ENCODE measurements at regions of chr3 and their contacts with region 1.

Region 1: GRCh38 chr3:30623351-30623750 is 16.9 kb downstream of the TGFBR2 start:
- DNase-seq: no peak
- ATAC-seq: no peak
- H3K4me3 ChIP-seq: no peak overlapping the region
- H3K4me3 Mint-ChIP-seq: peak overlapping the region; percentile 47 to 97 (median 61)
- H3K27ac ChIP-seq: peak overlapping the region; percentile 48
- H3K27ac Mint-ChIP-seq: peak overlapping the region; percentile 93
- H3K4me1 ChIP-seq: peaks cover 64 to 90% of the 10 kb centered on the region in 2 experiments
- H3K4me1 Mint-ChIP-seq: peaks cover 94 to 96% (median 95%) of the 10 kb centered on the region in 3 donors
- H3K27me3 ChIP-seq: no peaks in the 10 kb centered on the region
- H3K27me3 Mint-ChIP-seq: no peaks in the 10 kb centered on the region

Region 2: GRCh38 chr3:30607032-30607833 is 16.1 kb before region 1 on chr3:
- CTCF ChIA-PET with region 1: interaction called, 3 to 5 read pairs
- POLR2A ChIA-PET with region 1: interaction called, 3 to 18 read pairs
- DNase-seq: peak; percentile 52 to 80 (median 66)
- ATAC-seq: peak; percentile 46 to 56 (median 47)
- H3K4me3 ChIP-seq: peak overlapping the region; percentile 90 to 97
- H3K4me3 Mint-ChIP-seq: peak overlapping the region; percentile 96 to 99 (median 97)
- H3K27ac ChIP-seq: peak overlapping the region; percentile 88
- H3K27ac Mint-ChIP-seq: peak overlapping the region; percentile 93 to 99
- H3K4me1 ChIP-seq: peaks cover 37 to 43% of the 10 kb centered on the region in 2 experiments
- H3K4me1 Mint-ChIP-seq: peaks cover 61 to 70% (median 66%) of the 10 kb centered on the region in 3 donors
- H3K27me3 ChIP-seq: no peaks in the 10 kb centered on the region
- H3K27me3 Mint-ChIP-seq: no peaks in the 10 kb centered on the region

Region 3: GRCh38 chr3:30658328-30659052 is 35.1 kb after region 1 on chr3:
- CTCF ChIA-PET with region 1: interaction called in 1 of 2 experiments, 4 read pairs
- POLR2A ChIA-PET with region 1: interaction called, 3 to 17 read pairs
- DNase-seq: peak in 31 of 35 experiments; percentile 28 to 79 (median 47)
- ATAC-seq: peak; percentile 58 to 72 (median 68)
- H3K4me3 ChIP-seq: peak overlapping the region in 1 of 2 donors; percentile 3
- H3K4me3 Mint-ChIP-seq: peak overlapping the region; percentile 58 to 76 (median 62)
- H3K27ac ChIP-seq: peak overlapping the region; percentile 97
- H3K27ac Mint-ChIP-seq: peak overlapping the region; percentile 95 to 96
- H3K4me1 ChIP-seq: peaks cover 82 to 100% of the 10 kb centered on the region in 2 experiments
- H3K4me1 Mint-ChIP-seq: peaks cover 97 to 99% (median 97%) of the 10 kb centered on the region in 3 donors
- H3K27me3 ChIP-seq: no peaks in the 10 kb centered on the region
- H3K27me3 Mint-ChIP-seq: no peaks in the 10 kb centered on the region

Region 4: GRCh38 chr3:30847592-30847991 is 224.2 kb after region 1 on chr3:
- CTCF ChIA-PET with region 1: no interaction called
- POLR2A ChIA-PET with region 1: no interaction called
- DNase-seq: no peak
- ATAC-seq: no peak
- H3K4me3 ChIP-seq: no peak overlapping the region
- H3K4me3 Mint-ChIP-seq: no peak overlapping the region
- H3K27ac ChIP-seq: no peak overlapping the region
- H3K27ac Mint-ChIP-seq: no peak overlapping the region
- H3K4me1 ChIP-seq: no peaks in the 10 kb centered on the region
- H3K4me1 Mint-ChIP-seq: no peaks in the 10 kb centered on the region
- H3K27me3 ChIP-seq: peaks cover 0 to 2% of the 10 kb centered on the region in 2 experiments
- H3K27me3 Mint-ChIP-seq: no peaks in the 10 kb centered on the region

Region 5: GRCh38 chr3:31575448-31575847 is 952.1 kb after region 1 on chr3:
- CTCF ChIA-PET with region 1: no interaction called
- POLR2A ChIA-PET with region 1: interaction called in 1 of 2 experiments, 13 read pairs
- DNase-seq: peak in 1 of 35 experiments; percentile 39
- ATAC-seq: peak; percentile 67 to 83 (median 79)
- H3K4me3 ChIP-seq: no peak overlapping the region
- H3K4me3 Mint-ChIP-seq: peak overlapping the region in 2 of 3 donors; percentile 4 to 17
- H3K27ac ChIP-seq: no peak overlapping the region
- H3K27ac Mint-ChIP-seq: peak overlapping the region; percentile 27 to 42
- H3K4me1 ChIP-seq: peaks cover 5 to 26% of the 10 kb centered on the region in 2 experiments
- H3K4me1 Mint-ChIP-seq: peaks cover 21 to 41% (median 35%) of the 10 kb centered on the region in 3 donors
- H3K27me3 ChIP-seq: no peaks in the 10 kb centered on the region
- H3K27me3 Mint-ChIP-seq: no peaks in the 10 kb centered on the region

Measured in T-cell (primary cell).